ENCODE measurements at regions of chr19 and their contacts with region 1.

Region 1: GRCh38 chr19:15502264-15502663 is 6.1 kb upstream of the CYP4F22 start:
- DNase-seq: no peak
- ATAC-seq: no peak
- H3K4me3 Mint-ChIP-seq: no peak overlapping the region
- H3K27ac Mint-ChIP-seq: no peak overlapping the region
- H3K4me1 Mint-ChIP-seq: peaks cover 14% of the 10 kb centered on the region
- H3K27me3 Mint-ChIP-seq: peaks cover under 1% of the 10 kb centered on the region

Region 2: DNA sequence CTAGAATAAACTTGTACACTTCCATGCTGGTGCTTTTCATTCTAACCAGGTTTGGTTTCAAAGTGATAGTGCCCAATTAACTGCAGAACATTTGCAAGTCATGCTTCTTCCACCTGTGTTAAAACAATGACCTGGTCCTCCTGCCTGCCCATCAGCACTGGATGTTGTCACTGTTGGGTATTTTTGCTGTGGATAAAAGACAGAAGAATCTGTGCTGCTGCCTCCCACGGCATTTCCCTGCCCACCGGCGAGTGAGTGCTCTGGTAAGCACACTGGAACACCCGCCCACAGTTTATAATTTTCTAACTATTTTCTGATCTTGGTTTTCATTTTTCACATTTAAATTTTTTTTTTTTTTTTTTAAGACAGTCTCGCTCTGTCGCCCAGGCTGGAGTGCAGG is 120.4 kb before region 1 on chr19:
- CTCF ChIA-PET with region 1: no interaction called
- POLR2A ChIA-PET with region 1: no interaction called
- intact Hi-C with region 1: no loop called
- DNase-seq: no peak
- ATAC-seq: no peak
- H3K4me3 Mint-ChIP-seq: no peak overlapping the region
- H3K27ac Mint-ChIP-seq: peak overlapping the region; percentile 61
- H3K4me1 Mint-ChIP-seq: peaks cover 29% of the 10 kb centered on the region
- H3K27me3 Mint-ChIP-seq: no peaks in the 10 kb centered on the region

Region 3: DNA sequence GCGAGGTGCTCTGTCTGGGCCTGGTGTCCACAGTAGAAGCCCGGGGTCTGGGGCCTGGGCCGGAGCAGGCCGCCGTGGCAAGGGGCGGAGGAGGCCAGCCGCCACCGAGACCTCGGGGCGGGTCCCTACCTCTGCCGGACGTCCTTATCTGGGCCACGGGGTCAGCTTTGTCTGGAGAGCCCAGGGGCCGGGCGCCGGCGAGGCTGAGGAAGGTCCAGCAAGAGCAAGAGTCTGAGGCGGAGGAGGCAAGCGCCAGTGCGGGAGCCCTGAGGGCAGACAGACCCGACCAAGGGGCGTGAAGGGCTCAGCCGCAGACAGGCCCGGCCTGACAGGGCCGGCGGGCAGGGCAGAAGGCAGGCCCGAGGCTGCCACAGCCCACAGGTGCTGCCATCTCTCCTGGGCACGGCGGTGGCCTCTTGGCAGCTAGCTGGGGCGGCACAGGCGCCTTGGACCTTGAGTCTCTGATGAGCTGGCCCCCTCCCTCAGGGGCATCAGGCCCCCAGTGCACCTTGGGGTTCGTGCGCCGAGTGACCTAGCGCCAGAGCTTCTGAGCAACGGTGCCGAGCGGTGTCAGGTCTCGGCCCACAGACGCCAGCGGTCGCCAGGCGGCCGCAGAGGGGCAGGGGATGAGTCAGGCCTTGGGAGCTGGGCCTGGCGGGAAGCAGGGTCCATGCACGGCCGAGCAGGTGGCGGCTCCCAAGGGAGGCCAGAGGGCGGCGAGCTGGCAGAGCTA is 103.6 kb before region 1 on chr19:
- CTCF ChIA-PET with region 1: no interaction called
- POLR2A ChIA-PET with region 1: no interaction called
- intact Hi-C with region 1: no loop called
- DNase-seq: no peak
- ATAC-seq: no peak
- H3K4me3 Mint-ChIP-seq: no peak overlapping the region
- H3K27ac Mint-ChIP-seq: no peak overlapping the region
- H3K4me1 Mint-ChIP-seq: peaks cover 2% of the 10 kb centered on the region
- H3K27me3 Mint-ChIP-seq: no peaks in the 10 kb centered on the region

Region 4: GRCh38 chr19:15488489-15489224 is 13.6 kb before region 1 on chr19:
- CTCF ChIA-PET with region 1: no interaction called
- POLR2A ChIA-PET with region 1: no interaction called
- intact Hi-C with region 1: no loop called
- DNase-seq: no peak
- ATAC-seq: no peak
- H3K4me3 Mint-ChIP-seq: no peak overlapping the region
- H3K27ac Mint-ChIP-seq: no peak overlapping the region
- H3K4me1 Mint-ChIP-seq: peaks cover 5% of the 10 kb centered on the region
- H3K27me3 Mint-ChIP-seq: no peaks in the 10 kb centered on the region

Region 5: GRCh38 chr19:15640294-15640903 is 138.1 kb after region 1 on chr19 and contains the start of gene CYP4F3:
- CTCF ChIA-PET with region 1: no interaction called
- POLR2A ChIA-PET with region 1: no interaction called
- intact Hi-C with region 1: no loop called
- DNase-seq: no peak
- ATAC-seq: no peak
- H3K4me3 Mint-ChIP-seq: no peak within 1 kb of the TSS
- H3K27ac Mint-ChIP-seq: no peak within 1 kb of the TSS
- H3K4me1 Mint-ChIP-seq: peaks cover 2% of the 10 kb centered on the region
- H3K27me3 Mint-ChIP-seq: peaks cover 2% of the 10 kb centered on the region
- total RNA-seq, gene CYP4F3: 0.07 to 0.19 TPM

Region 6: GRCh38 chr19:16428372-16429036 is 926.2 kb after region 1 on chr19:
- CTCF ChIA-PET with region 1: no interaction called
- POLR2A ChIA-PET with region 1: interaction called, 11 read pairs
- intact Hi-C with region 1: no loop called
- DNase-seq: no peak
- ATAC-seq: no peak
- H3K4me3 Mint-ChIP-seq: no peak overlapping the region
- H3K27ac Mint-ChIP-seq: no peak overlapping the region
- H3K4me1 Mint-ChIP-seq: peaks cover 3% of the 10 kb centered on the region
- H3K27me3 Mint-ChIP-seq: no peaks in the 10 kb centered on the region